Activated CD4-positive, alpha-beta memory T cell treated with anti-CD3 and anti-CD28 coated beads for 36 hours (primary cell): ENCODE measurements at regions of chr5 and their contacts with region 1.

Region 1: DNA sequence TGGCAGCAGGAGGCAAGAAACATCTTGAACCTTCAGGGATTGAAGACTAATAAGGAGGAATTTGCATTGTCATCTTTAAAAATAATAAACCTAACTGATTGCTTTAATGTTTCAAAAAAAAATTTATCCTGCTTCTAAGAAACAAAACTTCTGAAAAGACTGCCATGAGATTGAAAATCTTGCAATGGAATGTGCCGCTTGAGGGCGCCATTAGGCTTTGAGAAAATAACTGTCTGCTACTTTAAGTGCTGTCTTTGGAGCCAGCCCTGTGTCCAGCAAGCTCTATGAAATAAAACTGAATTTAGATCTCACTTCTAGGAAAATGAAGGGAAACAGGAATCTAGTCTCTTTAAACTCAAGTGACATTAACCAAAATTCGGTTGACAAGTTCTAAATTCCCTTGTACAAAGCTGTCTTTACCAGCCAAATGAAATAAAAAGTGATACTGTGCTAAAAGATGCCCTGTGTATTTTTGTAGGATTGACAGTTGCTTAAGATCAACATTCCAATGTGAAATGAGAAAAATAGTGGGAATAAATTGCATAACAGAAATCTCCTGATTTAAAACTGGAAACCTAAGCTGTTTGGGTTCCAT is 79.4 kb downstream of the ESM1 start:
- DNase-seq: peak; percentile 79
- H3K4me3 Mint-ChIP-seq: no peak overlapping the region
- H3K27ac Mint-ChIP-seq: no peak overlapping the region
- H3K4me1 Mint-ChIP-seq: peaks cover 16% of the 10 kb centered on the region
- H3K27me3 Mint-ChIP-seq: peaks cover 39% of the 10 kb centered on the region

Region 2: GRCh38 chr5:53373451-53374158 is 1532.4 kb before region 1 on chr5:
- CTCF ChIA-PET with region 1: no interaction called
- POLR2A ChIA-PET with region 1: no interaction called
- intact Hi-C with region 1: no loop called
- DNase-seq: no peak
- H3K4me3 Mint-ChIP-seq: no peak overlapping the region
- H3K27ac Mint-ChIP-seq: no peak overlapping the region
- H3K4me1 Mint-ChIP-seq: no peaks in the 10 kb centered on the region
- H3K27me3 Mint-ChIP-seq: peaks cover 7% of the 10 kb centered on the region

Region 3: DNA sequence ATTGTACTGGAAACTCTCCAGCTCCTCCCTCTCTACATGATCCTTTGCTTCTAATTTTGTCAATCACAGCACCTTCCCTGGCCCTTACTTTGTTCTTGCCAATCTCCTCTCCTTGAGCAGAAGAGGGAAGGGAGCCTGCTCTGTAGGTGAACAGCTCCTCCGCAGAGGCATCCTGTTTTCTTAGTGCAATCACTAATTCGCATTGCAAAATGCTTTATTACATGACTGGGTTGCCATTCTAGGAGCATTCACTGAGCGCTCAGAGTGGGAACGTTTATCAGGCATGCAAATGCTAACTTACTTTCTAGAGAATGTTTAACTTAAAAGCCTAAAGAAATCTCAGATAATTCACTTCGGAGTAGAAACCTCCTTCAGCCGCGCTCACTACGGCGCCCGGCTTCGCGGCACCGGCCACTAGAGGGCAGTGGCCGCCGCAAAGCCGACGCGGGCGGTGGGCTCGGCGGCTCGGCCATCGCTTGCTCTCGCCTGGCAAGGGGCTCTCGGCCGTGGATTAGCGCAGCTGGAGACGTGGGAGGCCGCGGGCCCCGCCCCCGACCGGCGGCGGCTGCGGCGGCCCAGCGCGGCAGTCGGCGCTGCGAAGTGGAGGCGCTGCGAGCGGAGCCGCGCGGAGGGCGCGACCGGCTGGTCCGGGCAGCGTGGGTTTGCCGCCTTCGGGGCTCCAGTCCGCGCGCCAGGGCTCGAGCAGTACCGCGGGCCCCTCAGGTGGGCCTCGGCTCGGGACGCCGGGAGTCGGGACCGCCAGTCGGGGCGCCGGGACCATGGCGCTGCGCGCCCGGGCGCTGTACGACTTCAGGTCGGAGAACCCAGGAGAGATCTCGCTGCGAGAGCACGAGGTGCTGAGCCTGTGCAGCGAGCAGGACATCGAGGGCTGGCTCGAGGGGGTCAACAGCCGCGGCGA is 388.6 kb before region 1 on chr5 and contains the start of gene SNX18:
- CTCF ChIA-PET with region 1: interaction called, 14 read pairs
- POLR2A ChIA-PET with region 1: no interaction called
- intact Hi-C with region 1: no loop called
- DNase-seq: peak; percentile 92
- H3K4me3 Mint-ChIP-seq: peak within 1 kb of the TSS; percentile 64
- H3K27ac Mint-ChIP-seq: no peak within 1 kb of the TSS
- H3K4me1 Mint-ChIP-seq: peaks cover 42% of the 10 kb centered on the region
- H3K27me3 Mint-ChIP-seq: no peaks in the 10 kb centered on the region
- total RNA-seq, gene SNX18: 8.5 to 8.7 TPM

Region 4: GRCh38 chr5:54807421-54807820 is 98.6 kb before region 1 on chr5:
- CTCF ChIA-PET with region 1: no interaction called
- POLR2A ChIA-PET with region 1: no interaction called
- intact Hi-C with region 1: no loop called
- DNase-seq: no peak
- H3K4me3 Mint-ChIP-seq: no peak overlapping the region
- H3K27ac Mint-ChIP-seq: no peak overlapping the region
- H3K4me1 Mint-ChIP-seq: peaks cover 10% of the 10 kb centered on the region
- H3K27me3 Mint-ChIP-seq: peaks cover 2% of the 10 kb centered on the region

Region 5: DNA sequence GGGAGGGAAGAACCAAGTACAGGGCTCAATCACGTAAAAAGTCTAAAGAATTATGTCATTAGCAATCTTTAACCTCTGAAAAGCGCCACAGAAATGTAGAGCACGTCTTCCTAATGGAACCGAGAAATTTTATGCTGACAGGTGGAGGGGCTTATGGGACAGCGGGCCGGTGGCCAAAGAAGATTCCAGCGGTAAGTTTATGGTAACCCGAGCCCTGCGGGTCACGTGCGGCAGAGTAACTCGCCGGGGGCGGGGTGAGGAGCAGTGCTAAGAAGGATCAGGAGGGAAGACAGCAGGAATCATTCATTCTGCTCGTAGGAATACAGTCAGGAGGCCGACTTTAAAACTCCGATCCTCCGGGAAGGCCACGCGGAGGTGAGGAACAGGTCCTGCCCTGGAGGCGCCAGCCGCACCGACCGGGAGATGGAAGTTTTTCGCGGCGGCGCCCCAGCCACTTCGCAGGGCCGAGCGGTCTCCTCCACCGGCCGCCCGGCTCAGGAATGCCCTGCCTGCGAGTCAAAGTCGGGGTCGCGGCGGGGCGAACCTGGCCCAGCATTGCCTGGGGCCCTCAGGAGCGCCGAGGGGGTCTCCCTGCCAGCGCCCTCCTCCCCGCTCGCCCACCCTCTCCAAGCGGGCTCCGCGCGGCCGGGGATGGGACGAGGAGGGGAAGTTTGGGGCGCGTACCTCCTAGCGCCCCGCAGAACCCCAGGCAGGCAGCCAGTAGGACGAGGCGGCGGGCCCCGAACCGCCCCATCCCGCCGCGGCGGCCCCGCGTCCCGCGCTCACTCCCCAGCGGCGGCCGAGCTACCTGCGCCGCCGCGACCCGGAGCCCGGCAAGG is 22.4 kb before region 1 on chr5:
- CTCF ChIA-PET with region 1: interaction called, 4 read pairs
- POLR2A ChIA-PET with region 1: no interaction called
- intact Hi-C with region 1: loop called (anchors 2 kb)
- DNase-seq: no peak
- H3K4me3 Mint-ChIP-seq: peak overlapping the region; percentile 54
- H3K27ac Mint-ChIP-seq: no peak overlapping the region
- H3K4me1 Mint-ChIP-seq: peaks cover 11% of the 10 kb centered on the region
- H3K27me3 Mint-ChIP-seq: peaks cover 63% of the 10 kb centered on the region

Region 6: DNA sequence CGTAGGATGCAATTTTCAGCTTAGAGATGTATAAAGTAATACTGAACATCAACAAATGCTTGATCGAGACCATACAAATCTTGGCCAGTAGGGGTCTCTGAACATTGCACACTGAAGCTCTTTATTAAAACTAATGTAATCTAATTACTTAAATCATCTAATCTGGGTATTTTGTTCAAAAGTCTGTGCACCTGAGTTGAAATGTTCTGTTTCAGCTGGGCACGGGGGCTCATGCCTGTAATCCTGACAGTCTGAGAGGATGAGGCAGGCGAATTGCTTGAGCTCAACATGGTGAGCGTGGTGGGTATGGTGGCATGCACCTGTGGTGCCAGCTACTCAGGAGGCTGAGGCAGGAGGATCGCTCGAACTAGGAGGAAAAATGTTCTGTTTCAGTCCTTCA is 38.3 kb after region 1 on chr5:
- CTCF ChIA-PET with region 1: interaction called, 98 read pairs
- POLR2A ChIA-PET with region 1: no interaction called
- intact Hi-C with region 1: loop called (anchors 1 kb)
- DNase-seq: peak; percentile 15
- H3K4me3 Mint-ChIP-seq: no peak overlapping the region
- H3K27ac Mint-ChIP-seq: no peak overlapping the region
- H3K4me1 Mint-ChIP-seq: no peaks in the 10 kb centered on the region
- H3K27me3 Mint-ChIP-seq: no peaks in the 10 kb centered on the region

Region 7: DNA sequence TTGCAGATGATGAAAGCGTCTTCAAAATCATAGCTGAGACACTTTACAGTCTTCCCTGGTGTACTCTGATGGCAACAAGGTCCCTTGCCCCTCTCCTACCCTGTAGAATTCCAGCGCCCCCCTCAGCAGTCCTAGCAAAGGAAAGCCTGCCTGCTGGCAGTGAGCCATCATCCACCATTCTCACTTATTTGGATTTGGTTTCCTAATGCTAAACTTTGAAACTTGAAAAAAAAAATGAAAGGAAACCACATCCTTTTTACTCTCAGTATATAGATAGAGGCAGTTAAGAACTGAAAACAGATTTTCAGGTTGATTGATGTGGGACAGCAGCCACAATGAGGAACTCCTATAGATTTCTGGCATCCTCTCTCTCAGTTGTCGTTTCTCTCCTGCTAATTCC is 196.3 kb after region 1 on chr5 and contains the start of gene GZMA:
- CTCF ChIA-PET with region 1: interaction called, 3 read pairs
- POLR2A ChIA-PET with region 1: no interaction called
- intact Hi-C with region 1: loop called (anchors 1 kb)
- DNase-seq: peak; percentile 39
- H3K4me3 Mint-ChIP-seq: peak within 1 kb of the TSS; percentile 59
- H3K27ac Mint-ChIP-seq: peak within 1 kb of the TSS; percentile 77
- H3K4me1 Mint-ChIP-seq: peaks cover 65% of the 10 kb centered on the region
- H3K27me3 Mint-ChIP-seq: peaks cover 2% of the 10 kb centered on the region
- total RNA-seq, gene GZMA: 13.7 to 16.9 TPM

Region 8: DNA sequence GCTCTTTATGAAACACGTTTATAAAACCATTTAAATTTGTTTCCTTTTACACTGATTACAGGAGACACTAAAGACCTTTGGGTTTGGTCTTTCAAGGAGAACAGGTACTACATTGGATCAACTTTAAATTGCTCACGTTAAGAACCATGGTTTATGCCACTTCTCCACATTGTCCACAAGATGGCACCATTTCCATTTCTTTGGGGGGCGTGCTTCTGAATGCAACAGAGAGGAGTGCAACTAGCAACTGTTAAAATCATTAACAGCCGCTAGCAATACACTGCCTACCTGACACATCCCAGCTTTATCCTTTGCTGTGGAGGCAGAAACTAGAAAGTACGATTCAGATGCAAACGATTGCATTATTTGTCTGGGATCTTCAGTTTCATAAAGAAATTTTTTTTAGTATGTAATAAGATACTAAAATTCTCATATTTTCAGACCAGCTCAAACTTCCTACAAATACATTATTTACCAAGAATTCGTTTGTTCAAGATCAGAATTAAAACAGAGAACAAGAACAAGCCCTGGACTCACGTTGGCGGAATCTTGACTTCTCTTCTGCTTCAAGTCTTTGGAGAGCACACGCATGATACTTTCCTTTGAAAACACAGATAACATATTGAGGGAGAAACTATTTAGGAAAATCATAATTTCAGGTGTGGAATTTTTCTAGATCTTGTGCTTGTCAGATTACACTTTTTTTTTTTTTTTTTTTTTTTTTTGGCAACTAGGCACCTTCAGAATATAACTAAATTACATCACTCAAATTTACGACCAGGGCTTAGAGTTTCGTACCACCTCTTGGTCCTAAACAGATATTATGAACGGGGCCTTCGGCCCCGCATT is 266.2 kb after region 1 on chr5:
- CTCF ChIA-PET with region 1: interaction called, 15 read pairs
- POLR2A ChIA-PET with region 1: no interaction called
- intact Hi-C with region 1: no loop called
- DNase-seq: peak; percentile 75
- H3K4me3 Mint-ChIP-seq: peak overlapping the region; percentile 80
- H3K27ac Mint-ChIP-seq: no peak overlapping the region
- H3K4me1 Mint-ChIP-seq: peaks cover 39% of the 10 kb centered on the region
- H3K27me3 Mint-ChIP-seq: peaks cover 60% of the 10 kb centered on the region